ENCODE measurements at regions of chr10 and their contacts with region 1.

Region 1: GRCh38 chr10:106571192-106571946 is 593.1 kb downstream of the SORCS1 start:
- DNase-seq: no peak
- ATAC-seq: no peak
- H3K4me3 Mint-ChIP-seq: no peak overlapping the region
- H3K27ac Mint-ChIP-seq: no peak overlapping the region
- H3K4me1 Mint-ChIP-seq: no peaks in the 10 kb centered on the region
- H3K27me3 Mint-ChIP-seq: no peaks in the 10 kb centered on the region

Region 2: DNA sequence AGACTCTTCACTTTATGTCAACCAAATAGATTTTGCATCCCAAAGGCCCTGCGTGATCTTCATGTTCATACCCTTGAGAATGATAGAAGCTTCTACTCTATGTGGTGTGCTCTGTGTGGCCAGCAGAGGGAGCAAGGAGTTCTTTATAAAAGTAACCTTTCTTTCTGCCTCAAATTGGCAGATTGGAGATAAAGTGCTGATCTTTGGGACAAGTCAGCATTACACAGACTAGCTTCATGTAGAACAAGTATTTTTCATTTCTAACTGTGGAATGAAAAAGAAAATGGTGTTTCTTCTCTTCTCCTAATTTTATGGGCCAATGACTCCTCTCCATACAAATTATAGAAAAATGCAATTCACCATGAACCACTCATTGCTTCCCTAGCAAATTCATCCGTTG is 621.0 kb before region 1 on chr10:
- CTCF ChIA-PET with region 1: no interaction called
- POLR2A ChIA-PET with region 1: no interaction called
- intact Hi-C with region 1: loop called in 1 of 2 experiments (anchors 5 kb)
- DNase-seq: peak; percentile 49
- ATAC-seq: no peak
- H3K4me3 Mint-ChIP-seq: no peak overlapping the region
- H3K27ac Mint-ChIP-seq: no peak overlapping the region
- H3K4me1 Mint-ChIP-seq: no peaks in the 10 kb centered on the region
- H3K27me3 Mint-ChIP-seq: no peaks in the 10 kb centered on the region